Endothelial cell of umbilical vein (primary cell): ENCODE measurements at regions of chr1 and their contacts with region 1.

Region 1: DNA sequence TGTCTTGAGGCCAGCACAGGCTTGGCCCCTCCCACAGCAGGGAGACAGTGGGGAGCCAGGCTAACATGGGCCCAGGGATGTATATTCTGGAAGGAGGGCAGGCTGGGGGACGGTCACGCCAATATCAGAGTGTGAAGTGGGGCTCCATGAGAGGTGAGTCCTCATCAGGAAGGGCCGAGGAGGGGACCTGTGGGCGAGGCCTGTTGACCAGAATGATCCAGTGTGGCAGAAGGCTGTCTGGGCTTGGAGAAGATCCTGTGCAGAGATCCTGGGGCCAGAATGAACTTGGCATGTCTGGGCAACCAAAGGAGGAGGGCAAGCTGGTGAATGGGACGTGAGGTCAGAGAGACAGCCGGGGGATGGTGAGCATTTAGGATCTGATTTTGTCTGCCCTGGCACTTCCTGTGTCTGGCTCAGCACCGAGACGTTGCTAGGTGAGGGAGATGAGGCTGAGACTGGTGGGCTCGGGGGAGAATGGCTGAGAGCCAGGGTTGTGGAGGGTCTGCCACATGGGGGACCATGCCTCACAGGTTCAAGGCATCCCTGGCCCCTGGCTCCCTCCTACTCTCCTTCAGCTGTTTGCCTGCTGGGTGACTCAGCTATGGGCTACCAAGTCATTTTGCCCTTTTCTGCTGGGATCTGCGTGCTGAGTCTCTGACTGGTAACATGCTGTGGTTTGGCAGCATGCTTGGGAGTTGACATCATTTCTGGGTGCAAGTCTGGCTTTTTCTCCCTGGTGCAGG is 17.3 kb downstream of the GALNT2 start:
- DNase-seq: peak; percentile 75
- H3K4me3 ChIP-seq: no peak overlapping the region
- H3K27ac ChIP-seq: peak overlapping the region; percentile 75
- H3K4me1 ChIP-seq: peaks cover 20% of the 10 kb centered on the region
- H3K27me3 ChIP-seq: no peaks in the 10 kb centered on the region
- CTCF ChIP-seq: no peak
- POLR2A ChIP-seq: no peak

Region 2: DNA sequence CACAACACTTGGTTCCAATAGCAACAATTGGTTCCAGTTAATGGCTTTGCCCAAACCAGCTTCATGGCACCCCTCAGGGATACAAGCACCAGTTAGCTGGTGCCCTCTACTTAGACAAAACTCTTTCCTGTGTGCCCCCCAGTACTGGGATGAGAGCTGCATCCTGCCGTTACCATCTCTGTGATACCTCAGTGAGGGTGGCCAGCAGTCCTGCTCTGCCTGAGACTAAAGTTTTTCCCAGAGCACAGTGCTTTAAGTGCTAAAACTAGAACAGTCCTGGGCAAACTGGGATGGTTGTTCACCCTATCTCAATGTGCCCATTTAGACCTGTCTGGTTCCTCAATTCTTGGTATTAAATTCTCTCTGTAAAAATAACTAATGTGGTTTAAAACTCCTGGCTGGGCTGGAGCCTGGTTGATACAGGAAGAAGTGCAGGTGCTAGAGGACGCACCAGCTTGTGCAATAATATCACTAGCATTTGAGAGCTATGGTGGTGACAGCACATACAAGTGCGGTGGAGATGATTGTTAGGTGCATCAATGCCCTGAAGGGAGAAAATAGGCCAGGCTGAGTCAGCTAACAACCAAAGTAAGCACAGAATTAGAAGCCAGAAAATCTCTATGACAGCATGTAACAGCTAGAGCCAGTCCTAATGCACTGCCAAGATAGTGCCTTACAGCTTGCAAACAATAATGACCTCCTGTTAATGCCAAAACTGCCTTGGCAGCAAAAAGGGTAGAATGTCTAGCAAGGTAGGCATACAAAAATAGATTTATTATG is 197.1 kb before region 1 on chr1:
- CTCF ChIA-PET with region 1: no interaction called
- POLR2A ChIA-PET with region 1: no interaction called
- dilution Hi-C with region 1: no loop called
- intact Hi-C with region 1: no loop called
- DNase-seq: no peak
- H3K4me3 ChIP-seq: no peak overlapping the region
- H3K27ac ChIP-seq: no peak overlapping the region
- H3K4me1 ChIP-seq: no peaks in the 10 kb centered on the region
- H3K27me3 ChIP-seq: no peaks in the 10 kb centered on the region
- CTCF ChIP-seq: no peak
- POLR2A ChIP-seq: no peak

Region 3: GRCh38 chr1:230160957-230161771 is 76.9 kb after region 1 on chr1:
- CTCF ChIA-PET with region 1: no interaction called
- POLR2A ChIA-PET with region 1: no interaction called
- dilution Hi-C with region 1: no loop called
- intact Hi-C with region 1: loop called (anchors 1 kb)
- DNase-seq: peak; percentile 93
- H3K4me3 ChIP-seq: no peak overlapping the region
- H3K27ac ChIP-seq: no peak overlapping the region
- H3K4me1 ChIP-seq: peaks cover 15% of the 10 kb centered on the region
- H3K27me3 ChIP-seq: peaks cover 0 to 5% of the 10 kb centered on the region in 2 experiments
- CTCF ChIP-seq: no peak
- POLR2A ChIP-seq: no peak